Left lung (tissue), 14 donors: ENCODE measurements at regions of chr18 and their contacts with region 1.

Region 1: DNA sequence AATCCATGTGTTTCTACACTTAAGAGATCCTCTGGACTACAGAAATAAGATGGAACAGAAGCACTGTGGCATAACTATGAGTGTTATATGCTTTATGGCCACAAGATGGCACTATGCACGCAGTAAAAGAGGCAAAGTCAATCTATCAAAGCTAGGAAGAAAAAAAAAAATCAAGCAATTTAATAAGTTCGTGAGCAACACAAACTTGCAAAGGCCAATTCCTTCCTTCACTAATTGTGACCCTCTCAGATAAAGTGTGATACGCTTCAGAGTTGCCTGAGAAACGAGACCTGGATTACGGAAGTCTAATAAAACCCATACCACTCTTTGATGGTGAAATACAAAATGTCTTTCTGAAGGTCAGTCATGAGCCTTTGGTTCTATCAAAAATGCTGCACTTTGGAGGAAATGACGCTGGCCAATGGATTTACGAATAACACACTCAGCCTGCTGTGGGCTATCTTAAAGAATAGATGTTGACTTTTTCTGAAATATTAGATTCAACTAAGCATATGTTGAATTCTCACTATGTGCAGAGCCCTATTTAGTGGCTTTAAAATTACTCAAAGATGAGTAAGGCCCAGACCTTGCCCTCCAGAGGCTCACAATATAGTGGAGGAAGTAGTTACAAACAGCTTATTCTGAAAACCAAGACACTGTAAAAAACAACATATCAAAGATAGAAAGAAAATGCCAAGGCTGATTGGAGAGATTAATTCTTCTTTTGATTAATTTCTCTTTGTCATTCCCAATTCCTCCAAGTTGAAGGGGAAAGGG is 35.5 kb upstream of the TTR start:
- DNase-seq: peak in 2 of 4 donors; percentile 65 to 78
- ATAC-seq: peak; percentile 96
- H3K4me3 ChIP-seq: no peak overlapping the region
- H3K27ac ChIP-seq: no peak overlapping the region
- H3K4me1 ChIP-seq: peaks cover 0 to under 1% of the 10 kb centered on the region in 2 donors
- H3K27me3 ChIP-seq: no peaks in the 10 kb centered on the region
- CTCF ChIP-seq: peak; percentile 76 to 82

Region 2: GRCh38 chr18:31497837-31498573 is 58.2 kb before region 1 on chr18 and contains the start of gene DSG2:
- intact Hi-C with region 1: no loop called
- DNase-seq: peak; percentile 60 to 92 (median 72)
- ATAC-seq: peak; percentile 96
- H3K4me3 ChIP-seq: peak within 1 kb of the TSS; percentile 37 to 45
- H3K27ac ChIP-seq: peak within 1 kb of the TSS; percentile 73 to 74
- H3K4me1 ChIP-seq: peaks cover 0 to 10% of the 10 kb centered on the region in 2 donors
- H3K27me3 ChIP-seq: peaks cover 16 to 52% of the 10 kb centered on the region in 2 donors
- CTCF ChIP-seq: no peak
- polyA plus RNA-seq, gene DSG2: 36.2 to 45.0 (median 42.3) TPM

Region 3: DNA sequence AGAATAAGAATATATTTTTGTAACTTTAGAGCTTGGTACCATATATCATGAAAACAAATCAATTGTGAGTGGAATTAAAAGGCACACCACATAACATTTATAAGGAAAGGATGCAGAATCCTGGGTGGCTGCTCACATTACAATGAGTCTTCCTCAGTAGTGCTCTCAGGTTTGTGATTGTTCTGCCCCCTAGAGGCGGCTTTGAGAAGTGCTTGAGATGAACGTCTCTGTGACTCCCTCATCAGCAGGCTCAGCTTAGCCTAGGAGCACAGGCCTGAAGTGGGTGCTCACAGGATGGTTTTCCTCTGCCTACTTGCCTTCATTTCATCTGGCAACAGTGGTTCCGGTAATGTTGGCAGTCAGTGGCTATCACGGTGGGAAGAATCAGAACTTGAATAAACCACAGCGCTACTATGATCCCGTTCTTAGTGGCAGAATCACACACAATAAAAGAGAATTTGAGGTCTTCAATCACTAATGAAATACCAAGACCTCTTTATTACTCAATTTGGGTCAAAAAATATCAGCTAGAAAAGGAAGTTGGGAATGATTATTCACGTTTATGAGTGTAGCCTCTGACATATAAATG is 166.3 kb after region 1 on chr18:
- intact Hi-C with region 1: loop called in 1 of 2 experiments (anchors 5 kb)
- DNase-seq: peak in 3 of 4 donors; percentile 50 to 79 (median 64)
- ATAC-seq: peak; percentile 97
- H3K4me3 ChIP-seq: no peak overlapping the region
- H3K27ac ChIP-seq: no peak overlapping the region
- H3K4me1 ChIP-seq: peaks cover 4 to 14% of the 10 kb centered on the region in 2 donors
- H3K27me3 ChIP-seq: peaks cover 0 to 30% of the 10 kb centered on the region in 2 donors
- CTCF ChIP-seq: peak; percentile 85 to 92

Region 4: DNA sequence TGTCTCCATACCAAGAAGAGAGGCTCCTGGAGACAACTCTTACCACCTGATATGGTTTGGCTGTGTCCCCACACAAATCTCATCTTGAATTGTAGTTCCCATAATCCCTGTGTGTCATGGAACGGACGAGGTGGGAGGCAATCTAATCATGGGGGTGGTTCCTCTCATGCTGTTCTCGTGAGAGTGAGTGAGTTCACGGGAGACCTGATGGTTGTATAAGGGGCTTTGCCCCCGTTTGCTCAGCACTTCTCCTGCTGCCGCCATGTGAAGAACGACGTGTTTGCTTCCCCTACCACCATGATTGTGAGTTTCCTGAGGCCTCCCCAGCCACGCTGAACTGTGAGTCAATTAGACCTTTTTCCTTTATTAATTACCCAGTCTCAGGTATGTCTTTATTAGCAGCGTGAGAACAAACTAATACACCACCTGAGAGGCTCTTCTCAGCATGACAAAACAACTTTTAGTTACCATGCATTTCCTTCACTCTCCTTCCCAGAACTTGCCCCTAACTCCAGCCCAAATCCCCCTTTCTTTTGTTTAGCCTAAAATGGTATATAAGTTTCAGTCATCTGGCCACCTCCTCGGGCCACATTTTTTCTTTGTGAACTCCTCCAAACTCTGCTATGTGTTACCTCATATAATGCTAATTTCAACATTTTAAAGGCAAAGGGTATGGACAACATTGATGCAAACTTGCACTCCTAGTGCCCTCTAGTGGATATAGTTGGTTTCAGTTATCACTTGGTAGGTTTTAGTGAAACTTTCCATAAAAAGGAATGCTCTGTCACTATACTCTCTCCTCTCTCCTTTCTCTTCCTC is 263.2 kb after region 1 on chr18:
- intact Hi-C with region 1: loop called in 1 of 2 experiments (anchors 10 kb)
- DNase-seq: peak in 2 of 4 donors; percentile 40 to 60
- ATAC-seq: peak; percentile 87
- H3K4me3 ChIP-seq: no peak overlapping the region
- H3K27ac ChIP-seq: no peak overlapping the region
- H3K4me1 ChIP-seq: no peaks in the 10 kb centered on the region
- H3K27me3 ChIP-seq: no peaks in the 10 kb centered on the region
- CTCF ChIP-seq: peak; percentile 62 to 77